Sciatic nerve (tissue), 2 donors: ENCODE measurements at regions of chr3 and their contacts with region 1.

Region 1: DNA sequence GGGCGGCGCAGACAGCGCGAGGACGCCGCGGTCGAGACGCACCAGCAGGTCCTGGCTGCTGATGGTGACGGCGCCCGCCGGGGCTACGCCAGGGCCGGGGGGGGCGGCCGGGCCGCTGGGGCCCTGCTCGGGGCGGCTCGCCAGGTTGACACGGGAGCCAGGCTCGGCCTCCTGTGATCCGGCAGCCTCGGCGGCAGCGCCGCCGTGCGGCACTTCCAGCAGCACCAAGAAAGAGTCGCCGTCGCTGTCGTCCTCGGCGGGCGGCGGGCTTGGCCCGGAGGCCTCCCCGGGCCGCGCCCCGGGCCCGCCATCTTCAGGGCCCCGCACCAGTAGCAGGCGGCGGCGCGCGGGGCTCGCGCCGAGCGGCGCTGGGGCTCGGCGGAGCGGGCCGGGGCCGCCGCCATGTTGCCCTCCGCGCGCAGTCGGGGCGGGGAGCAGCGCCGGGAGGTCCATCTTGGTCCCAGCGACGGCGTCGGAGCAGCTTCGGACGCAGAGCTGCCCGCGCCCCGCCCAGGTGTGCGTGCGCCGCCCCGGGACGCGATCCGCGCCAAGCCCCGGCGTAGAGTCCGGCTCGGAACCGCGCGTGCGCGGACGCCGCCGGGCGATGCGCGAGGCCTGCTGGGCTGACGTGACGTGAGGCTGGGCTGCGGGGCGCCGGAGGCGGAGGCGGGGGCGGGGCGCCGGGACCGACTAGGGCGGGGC is at the start of gene ZXDC:
- DNase-seq: peak; percentile 96
- ATAC-seq: peak; percentile 91
- total RNA-seq, gene ZXDC: 39.7 TPM

Region 2: DNA sequence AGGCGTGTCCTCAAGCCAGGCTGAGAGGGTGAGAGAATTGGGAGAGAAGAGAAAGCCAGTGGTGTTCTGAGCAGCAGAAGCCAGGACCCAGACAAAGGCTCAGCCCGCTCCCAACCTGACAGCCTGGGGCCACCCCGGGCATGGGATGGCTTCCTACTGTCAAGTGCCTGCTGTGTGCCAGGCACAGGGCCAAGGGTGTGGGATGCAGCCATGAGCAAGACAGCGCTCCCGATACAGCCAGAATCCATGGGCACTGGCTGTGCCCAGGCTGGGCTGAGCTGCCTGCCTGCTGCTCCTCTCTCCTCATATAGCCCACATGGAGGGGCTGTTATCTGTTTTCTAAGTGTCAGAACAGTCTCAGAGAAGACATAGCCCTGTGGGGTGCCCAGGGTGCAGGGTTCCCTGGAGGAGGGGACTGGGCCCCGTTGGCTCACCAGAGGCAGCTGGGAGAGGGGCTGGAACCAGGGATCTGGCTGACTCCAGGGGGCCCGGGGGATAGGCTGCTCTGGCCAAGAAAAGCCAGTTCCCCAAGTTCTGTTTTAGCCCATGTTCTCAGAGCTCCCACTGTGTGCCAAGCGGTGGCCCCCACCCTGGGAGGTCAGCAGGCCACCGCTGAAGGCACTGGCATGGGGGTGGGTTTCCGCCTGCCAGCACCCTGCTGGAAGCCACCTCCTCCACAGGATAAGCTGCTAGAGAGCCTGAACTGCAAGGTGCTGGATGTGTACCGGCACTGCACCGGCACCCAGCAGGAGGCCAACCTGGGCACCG is 41.9 kb before region 1 on chr3:
- intact Hi-C with region 1: loop called (anchors 1 kb)
- DNase-seq: peak; percentile 51
- ATAC-seq: peak; percentile 34

Region 3: GRCh38 chr3:127052121-127052561 is 576.6 kb after region 1 on chr3:
- intact Hi-C with region 1: no loop called
- DNase-seq: peak; percentile 83
- ATAC-seq: peak; percentile 96